Lower leg skin (tissue), 4 donors: ENCODE measurements at regions of chr1 and their contacts with region 1.

Region 1: GRCh38 chr1:175877939-175878737 is 134.7 kb upstream of the TNR start:
- DNase-seq: no peak
- H3K4me3 ChIP-seq: no peak overlapping the region
- CTCF ChIP-seq: no peak
- POLR2A ChIP-seq: no peak

Region 2: DNA sequence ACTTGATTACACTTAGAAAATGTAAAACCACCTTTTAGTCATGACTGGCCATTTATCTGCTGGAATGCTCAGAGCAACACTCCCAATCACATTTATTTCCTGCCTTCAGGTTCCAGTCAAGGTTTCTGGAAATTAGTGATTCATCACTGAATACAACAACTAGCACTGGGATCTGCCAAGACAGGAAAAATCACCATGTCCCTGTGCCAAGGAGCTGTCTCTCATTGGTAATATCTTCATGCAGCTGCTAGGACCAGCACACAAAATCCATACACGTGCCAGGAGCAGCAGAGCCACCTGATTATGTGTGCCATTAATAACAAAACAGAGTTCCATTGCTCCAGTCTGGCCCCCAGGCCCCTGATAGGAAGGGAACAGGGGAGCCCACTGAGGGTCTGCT is 329.4 kb before region 1 on chr1:
- intact Hi-C with region 1: no loop called
- DNase-seq: no peak
- H3K4me3 ChIP-seq: no peak overlapping the region
- CTCF ChIP-seq: no peak
- POLR2A ChIP-seq: no peak

Region 3: GRCh38 chr1:176926330-176927086 is 1048.4 kb after region 1 on chr1:
- intact Hi-C with region 1: loop called (anchors 5 kb)
- DNase-seq: no peak
- H3K4me3 ChIP-seq: no peak overlapping the region
- CTCF ChIP-seq: no peak
- POLR2A ChIP-seq: no peak